ENCODE measurements at regions of chr20 and their contacts with region 1.

Region 1: DNA sequence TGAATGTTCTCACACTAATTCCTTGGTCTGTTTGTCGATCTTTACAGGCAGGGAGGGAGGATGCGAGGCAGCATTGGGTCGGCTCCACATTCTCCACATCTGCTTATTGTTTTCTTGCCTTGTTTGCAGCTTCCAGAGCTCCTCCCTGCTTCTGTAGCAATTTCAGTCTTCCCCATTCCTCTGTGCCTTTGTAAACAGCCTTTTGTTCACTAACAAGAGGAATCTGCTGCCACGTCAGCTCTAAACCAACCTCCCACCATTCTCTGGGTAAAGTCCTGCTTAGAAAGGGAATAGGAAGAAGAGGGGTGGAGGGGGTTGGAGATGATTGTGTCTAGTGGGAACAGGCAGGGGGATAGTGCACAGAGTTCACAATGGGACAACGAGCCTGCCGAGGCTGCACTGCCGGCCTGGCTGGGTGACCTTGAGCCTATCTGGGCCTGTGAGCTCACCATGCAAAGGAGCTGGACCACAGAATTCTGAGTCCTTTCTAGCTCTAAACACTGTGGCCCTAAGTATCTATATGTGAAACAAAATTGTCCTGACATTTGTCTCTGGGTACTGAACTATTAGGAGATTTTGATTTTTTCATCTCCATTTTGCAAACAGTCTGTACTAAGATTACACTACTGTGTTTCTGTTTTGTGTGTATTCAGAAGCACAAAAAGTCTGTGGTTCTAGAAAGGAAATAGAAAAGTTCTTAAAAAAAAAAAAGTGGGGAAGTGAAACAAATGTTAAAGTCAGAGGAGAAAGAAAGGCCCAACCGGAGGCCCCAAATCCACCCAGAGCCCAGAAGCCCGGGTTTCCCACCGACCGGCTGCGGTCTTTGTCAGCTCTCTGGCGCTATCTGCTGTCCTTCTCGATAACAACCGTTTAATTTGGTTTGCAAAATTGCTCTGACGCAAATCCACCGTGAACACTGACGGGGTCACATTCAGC is 1.4 kb upstream of the PRND start:
- DNase-seq: peak; percentile 90
- H3K4me3 Mint-ChIP-seq: no peak overlapping the region
- H3K27ac Mint-ChIP-seq: no peak overlapping the region
- H3K4me1 Mint-ChIP-seq: peaks cover 7% of the 10 kb centered on the region
- H3K27me3 Mint-ChIP-seq: no peaks in the 10 kb centered on the region

Region 2: GRCh38 chr20:4108495-4109306 is 611.6 kb before region 1 on chr20:
- CTCF ChIA-PET with region 1: no interaction called
- intact Hi-C with region 1: loop called (anchors 2 kb)
- DNase-seq: peak; percentile 86
- H3K4me3 Mint-ChIP-seq: no peak overlapping the region
- H3K27ac Mint-ChIP-seq: peak overlapping the region; percentile 48
- H3K4me1 Mint-ChIP-seq: peaks cover 12% of the 10 kb centered on the region
- H3K27me3 Mint-ChIP-seq: peaks cover 5% of the 10 kb centered on the region

Region 3: GRCh38 chr20:4607287-4607713 is 113.0 kb before region 1 on chr20:
- CTCF ChIA-PET with region 1: interaction called, 90 read pairs
- intact Hi-C with region 1: loop called (anchors 1 kb)
- DNase-seq: peak; percentile 74
- H3K4me3 Mint-ChIP-seq: no peak overlapping the region
- H3K27ac Mint-ChIP-seq: no peak overlapping the region
- H3K4me1 Mint-ChIP-seq: no peaks in the 10 kb centered on the region
- H3K27me3 Mint-ChIP-seq: peaks cover 2% of the 10 kb centered on the region

Region 4: DNA sequence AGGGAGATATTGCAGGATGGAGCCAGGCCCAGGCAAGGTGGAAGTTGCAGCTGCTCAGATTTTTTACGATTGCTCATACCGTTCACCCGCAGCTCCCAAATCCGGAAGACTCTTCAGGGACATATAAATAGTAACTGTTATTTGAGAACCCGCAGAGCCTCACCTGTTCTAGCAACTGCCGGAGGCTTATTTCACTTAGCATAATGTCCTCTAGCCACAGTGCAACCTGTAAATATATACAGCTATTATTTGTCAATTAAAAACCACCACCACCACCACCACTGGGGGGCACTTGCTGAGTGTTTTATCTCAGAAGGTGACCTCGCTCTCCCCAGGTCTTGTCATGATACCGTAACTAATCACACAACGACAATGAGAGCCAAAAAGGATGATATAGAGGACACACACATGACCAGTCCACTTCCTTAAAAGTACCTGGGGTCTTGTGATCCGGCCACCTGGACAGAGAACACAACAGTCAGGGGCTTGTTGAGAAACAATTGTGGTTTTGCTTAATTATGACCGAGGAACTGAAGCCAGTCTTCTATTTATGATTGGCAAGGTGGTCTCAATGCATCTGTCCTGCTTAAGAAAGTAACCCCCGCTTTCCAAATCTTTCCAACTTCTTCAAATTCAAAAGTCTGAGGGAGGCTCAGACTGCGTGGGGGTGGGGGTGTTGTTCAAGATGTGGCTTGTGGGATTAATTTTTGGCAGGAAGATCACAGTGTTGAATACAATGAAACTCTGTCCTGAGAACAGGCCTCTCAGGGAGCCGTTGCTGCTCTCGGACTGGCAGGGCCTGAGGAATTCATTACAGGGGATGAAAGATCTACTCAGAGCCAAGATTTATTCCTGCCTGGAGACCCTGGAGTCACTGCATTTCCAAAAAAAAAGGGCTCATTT is 106.3 kb before region 1 on chr20:
- CTCF ChIA-PET with region 1: interaction called, 90 read pairs
- intact Hi-C with region 1: loop called (anchors 1 kb)
- DNase-seq: peak; percentile 84
- H3K4me3 Mint-ChIP-seq: no peak overlapping the region
- H3K27ac Mint-ChIP-seq: no peak overlapping the region
- H3K4me1 Mint-ChIP-seq: peaks cover 2% of the 10 kb centered on the region
- H3K27me3 Mint-ChIP-seq: no peaks in the 10 kb centered on the region

Region 5: DNA sequence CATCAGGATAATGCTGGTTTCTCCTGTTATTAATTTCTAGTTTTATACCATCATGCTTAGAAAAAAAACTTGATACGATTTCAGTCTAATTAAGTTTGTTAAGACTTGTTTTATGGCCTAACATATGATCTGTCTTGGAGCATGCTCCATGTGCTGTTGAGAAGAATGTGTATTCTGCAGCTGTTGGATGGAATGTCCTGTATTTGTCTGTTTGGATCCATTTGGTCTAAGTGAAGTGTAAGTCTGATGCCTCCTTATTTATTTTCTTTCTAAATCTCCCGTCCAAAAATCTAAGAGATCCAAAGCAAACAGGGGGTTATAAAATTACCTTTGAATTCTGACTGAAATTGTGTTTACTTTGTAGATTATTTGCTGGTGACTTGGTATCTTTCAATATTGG is 28.6 kb before region 1 on chr20:
- CTCF ChIA-PET with region 1: interaction called, 10 read pairs
- intact Hi-C with region 1: no loop called
- DNase-seq: no peak
- H3K4me3 Mint-ChIP-seq: no peak overlapping the region
- H3K27ac Mint-ChIP-seq: no peak overlapping the region
- H3K4me1 Mint-ChIP-seq: peaks cover 67% of the 10 kb centered on the region
- H3K27me3 Mint-ChIP-seq: no peaks in the 10 kb centered on the region

Measured in activated naive CD4-positive, alpha-beta T cell treated with anti-CD3 and anti-CD28 coated beads for 36 hours (primary cell).